AG04449 (cell line): ENCODE measurements at regions of chr6 and their contacts with region 1.

Region 1: DNA sequence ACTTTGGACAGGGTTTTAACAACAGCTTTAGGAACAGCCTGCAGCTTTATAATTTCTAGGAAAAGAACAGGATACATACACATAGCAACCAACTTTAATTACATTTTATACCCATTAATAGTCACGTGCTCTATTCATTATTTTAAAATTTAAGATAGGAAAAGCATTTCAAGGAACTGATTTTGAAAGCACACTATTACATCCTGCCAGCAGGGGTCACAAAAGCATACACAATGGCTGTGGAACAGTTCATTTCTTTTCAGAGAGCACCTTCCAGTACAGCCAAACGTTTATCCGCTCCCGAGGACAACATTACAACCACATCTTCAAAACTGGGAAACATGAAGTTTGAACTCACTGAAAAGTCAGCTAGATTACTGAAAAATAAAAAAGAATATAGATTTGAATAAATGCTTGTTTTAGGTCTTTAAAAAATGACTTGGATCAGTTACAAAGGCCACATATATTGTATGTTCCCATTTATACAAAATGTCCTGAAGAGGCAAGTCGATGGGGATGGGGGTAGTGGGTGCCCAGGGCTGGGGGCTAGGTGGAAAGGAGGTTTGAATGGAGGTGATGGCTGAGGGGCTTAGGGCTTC is 104.6 kb upstream of the EXOC2 start:
- DNase-seq: no peak
- H3K4me3 ChIP-seq: no peak overlapping the region
- CTCF ChIP-seq: peak; percentile 62

Region 2: DNA sequence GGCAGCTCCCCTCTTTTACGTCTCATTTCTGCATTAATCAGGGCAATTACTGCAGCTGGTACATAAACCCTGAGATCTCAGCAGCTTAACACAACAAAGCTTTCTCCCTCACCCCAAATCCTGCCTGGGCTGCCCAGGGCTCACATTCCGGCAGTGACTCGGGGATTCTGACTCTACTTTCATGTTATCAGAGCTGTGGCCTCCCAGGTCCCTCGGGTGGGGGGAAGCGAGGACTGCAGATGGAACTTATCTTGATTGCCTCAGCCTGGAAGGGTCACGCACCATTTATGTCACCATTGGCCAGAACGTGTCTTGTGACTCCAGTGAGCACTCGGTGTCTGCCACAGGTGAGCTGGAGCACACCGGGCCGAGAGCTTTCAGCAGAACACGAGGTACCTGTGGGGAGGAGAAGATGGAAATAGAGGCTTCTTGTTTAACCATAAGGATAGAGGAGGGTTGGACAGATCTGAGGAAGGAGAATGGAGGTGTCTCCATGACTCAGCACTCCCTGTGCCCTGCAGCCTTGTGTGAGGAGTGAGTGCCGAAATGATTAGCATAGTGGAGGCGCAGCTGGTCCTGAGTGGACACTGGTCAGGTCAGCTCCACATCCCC is 16.1 kb before region 1 on chr6:
- CTCF ChIA-PET with region 1: interaction called, 12 read pairs
- POLR2A ChIA-PET with region 1: no interaction called
- DNase-seq: no peak
- H3K4me3 ChIP-seq: no peak overlapping the region
- CTCF ChIP-seq: no peak

Region 3: GRCh38 chr6:865846-866245 is 68.3 kb after region 1 on chr6:
- CTCF ChIA-PET with region 1: no interaction called
- POLR2A ChIA-PET with region 1: no interaction called
- DNase-seq: no peak
- H3K4me3 ChIP-seq: no peak overlapping the region
- CTCF ChIP-seq: no peak

Region 4: DNA sequence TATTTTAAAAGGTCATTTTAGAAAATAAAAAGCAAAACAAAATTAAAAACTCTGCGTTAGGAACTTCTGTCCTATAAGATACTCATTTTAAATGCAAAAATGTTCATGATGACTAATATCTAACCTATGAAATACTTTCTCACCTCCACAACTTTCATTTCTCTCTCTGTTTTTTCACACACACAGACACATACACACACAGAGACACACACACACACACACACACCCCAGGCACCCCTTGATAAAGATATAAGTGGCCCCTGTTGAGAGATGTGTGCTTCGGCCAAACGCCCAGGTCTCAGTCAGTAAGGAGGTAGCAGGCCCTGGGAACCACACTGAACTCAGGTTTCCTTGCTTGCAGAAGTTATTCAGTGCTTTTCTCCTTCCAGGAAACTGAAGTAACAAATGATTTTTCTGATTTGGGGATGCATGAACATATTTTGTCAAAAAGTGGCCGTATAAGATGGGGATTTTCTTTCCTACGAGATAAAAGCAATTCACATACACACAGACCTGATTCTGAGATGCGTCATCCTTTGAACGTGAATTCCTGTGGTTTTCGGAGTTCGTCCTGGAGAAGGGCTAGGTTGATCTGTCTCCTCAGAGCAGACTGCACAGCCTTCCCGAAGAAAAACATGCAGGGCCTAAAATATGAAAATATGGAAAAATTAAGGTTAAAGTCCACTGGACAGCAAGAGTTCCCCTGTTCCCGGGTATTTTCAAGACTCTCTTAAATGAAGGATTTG is 207.5 kb after region 1 on chr6:
- CTCF ChIA-PET with region 1: no interaction called
- POLR2A ChIA-PET with region 1: no interaction called
- DNase-seq: no peak
- H3K4me3 ChIP-seq: no peak overlapping the region
- CTCF ChIP-seq: no peak

Region 5: GRCh38 chr6:1278061-1278720 is 480.6 kb after region 1 on chr6:
- CTCF ChIA-PET with region 1: no interaction called
- POLR2A ChIA-PET with region 1: no interaction called
- DNase-seq: no peak
- H3K4me3 ChIP-seq: no peak overlapping the region
- CTCF ChIP-seq: no peak

Region 6: DNA sequence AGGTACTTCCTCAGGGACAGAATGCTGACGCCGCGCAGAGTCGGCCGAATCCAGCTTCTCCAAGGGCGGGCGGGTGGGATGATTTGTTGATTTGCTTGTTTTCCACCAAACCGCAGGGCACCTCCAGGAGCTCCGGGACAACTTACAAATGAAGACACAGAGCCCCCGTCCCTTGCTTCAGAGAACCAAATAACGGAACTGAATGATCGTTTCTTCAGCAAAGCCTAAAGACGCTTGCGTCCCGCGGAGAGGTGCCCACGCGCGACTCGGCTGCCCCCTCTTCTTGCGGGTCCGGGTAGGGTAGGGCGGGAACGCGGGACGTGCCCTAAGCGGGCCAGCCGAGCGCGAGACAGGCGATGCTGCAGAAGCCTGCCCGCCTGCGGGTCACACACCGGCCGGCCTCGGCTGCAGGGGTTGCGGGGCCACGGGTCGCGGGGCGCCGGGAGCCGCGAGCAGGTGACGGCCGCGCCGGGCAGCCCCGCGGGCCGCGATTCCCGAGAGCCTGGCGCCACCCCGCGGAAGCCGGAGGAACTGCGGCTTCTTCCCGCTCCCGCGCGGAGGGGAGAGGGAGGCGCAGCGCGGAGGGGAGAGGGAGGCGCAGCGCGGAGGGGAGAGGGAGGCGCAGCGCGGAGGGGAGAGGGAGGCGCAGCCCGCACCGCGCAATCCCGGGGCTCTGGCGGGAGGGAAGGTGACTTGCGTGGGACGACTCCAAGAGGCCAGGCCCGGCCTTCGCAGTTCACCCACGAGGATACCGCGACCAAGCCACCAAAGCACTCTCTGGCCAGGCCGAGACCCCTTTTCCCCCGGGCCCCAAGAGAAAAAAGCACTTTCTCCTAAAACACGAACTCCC is 584.1 kb after region 1 on chr6:
- CTCF ChIA-PET with region 1: interaction called, 26 read pairs
- POLR2A ChIA-PET with region 1: no interaction called
- DNase-seq: no peak
- H3K4me3 ChIP-seq: no peak overlapping the region
- CTCF ChIP-seq: peak; percentile 79

Region 7: DNA sequence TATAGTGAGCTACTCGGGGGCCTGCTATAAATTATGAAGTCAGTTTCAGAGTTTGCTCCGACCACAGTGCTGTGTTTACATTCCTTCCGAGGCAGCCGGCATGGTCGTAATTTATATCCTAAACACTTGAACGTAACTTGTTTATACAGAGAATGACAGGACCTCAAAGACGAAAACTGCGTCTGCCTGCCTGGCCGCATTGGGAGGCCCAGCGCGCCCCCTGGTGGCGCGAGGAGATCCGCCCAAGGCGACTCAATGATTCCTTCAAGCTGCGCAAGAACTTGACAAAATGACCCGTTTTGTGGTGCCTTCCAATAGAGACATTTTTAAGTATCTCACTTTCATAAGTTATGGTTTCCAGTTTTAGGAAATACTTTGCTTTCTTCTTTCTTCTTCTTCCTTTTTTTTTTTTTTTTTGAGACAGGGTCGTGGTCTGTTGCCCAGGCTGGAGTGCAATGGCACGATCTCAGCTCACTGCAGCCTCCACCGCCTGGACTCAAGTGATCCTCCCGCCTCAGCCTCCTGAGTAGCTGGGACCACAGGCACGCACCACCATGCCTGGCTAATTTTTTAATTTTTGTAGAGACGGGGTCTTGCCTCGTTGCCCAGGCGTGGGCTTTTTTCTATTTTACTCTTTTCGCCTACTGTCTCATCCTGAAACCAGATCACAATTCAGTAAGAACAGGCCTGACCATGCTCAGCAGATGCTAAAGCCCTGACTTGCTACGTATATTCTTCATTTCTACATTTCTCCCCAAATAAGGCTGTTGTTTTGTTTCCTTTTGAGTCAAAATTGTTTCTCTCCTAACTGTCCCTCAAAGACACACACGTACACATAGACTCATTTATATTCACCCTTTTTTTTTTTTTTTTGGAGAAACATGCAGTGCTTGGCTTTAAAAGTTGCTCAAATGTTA is 599.6 kb after region 1 on chr6:
- CTCF ChIA-PET with region 1: interaction called, 43 read pairs
- POLR2A ChIA-PET with region 1: no interaction called
- DNase-seq: no peak
- H3K4me3 ChIP-seq: no peak overlapping the region
- CTCF ChIP-seq: peak; percentile 92